ENCODE measurements at regions of chr6 and their contacts with region 1.

Region 1: DNA sequence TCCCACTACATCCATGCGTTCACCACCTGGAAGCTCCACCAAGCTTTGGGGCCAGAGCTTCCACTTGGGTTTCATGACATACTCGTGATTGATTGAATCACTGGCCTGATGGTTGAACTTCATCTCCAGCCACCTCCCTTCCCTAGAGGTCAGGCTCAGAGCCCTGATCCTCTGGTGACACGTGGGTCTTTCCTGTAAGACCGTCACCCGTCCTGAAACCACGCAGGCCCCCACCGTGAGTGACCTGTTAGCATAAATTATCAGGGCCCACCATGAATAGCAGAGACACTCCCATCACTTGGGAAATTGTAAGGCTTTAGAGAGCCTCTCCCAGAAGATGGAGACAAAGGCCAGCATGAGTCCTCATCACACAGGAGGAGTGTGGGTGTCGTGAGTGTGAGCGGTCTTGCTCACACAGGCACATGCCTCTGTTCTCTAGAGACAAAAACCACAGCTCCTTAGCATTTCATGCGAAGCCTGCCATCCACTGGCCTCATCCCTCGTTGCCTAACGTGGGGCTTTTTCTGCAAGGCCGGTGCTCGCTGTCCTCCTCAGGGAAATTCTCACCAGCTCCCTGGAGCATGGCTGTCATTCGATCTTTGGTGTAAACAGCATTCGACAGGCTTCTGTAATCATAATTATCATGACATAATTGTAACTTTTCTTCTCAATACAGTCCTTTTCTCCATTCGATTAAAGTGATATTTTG is 65.1 kb upstream of the DUSP22 start:
- DNase-seq: no peak
- ATAC-seq: no peak
- H3K4me3 Mint-ChIP-seq: no peak overlapping the region
- H3K27ac Mint-ChIP-seq: peak overlapping the region; percentile 95
- H3K4me1 Mint-ChIP-seq: peaks cover 72% of the 10 kb centered on the region
- H3K27me3 Mint-ChIP-seq: no peaks in the 10 kb centered on the region

Region 2: DNA sequence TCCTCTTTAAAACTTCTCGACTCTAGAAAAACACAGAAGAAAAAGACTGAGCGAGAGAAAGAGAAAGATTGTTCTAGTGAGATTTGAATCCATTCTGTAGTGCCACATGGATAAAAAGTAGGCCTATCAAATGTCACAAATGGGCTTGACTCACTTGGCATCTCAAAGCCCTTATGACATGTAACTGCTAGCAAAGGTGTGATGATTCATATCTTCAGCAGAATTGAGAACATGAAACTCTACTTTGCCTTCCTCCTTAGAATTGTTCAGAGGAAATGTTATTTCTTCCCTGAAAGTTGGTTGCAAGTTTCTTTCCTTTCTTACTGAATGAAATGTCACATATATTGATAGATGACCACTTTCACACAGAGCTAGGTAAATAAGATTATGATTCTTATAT is 24.7 kb after region 1 on chr6:
- CTCF ChIA-PET with region 1: no interaction called
- POLR2A ChIA-PET with region 1: no interaction called
- DNase-seq: no peak
- ATAC-seq: peak; percentile 66
- H3K4me3 Mint-ChIP-seq: peak overlapping the region; percentile 14
- H3K27ac Mint-ChIP-seq: peak overlapping the region; percentile 75
- H3K4me1 Mint-ChIP-seq: peaks cover 54% of the 10 kb centered on the region
- H3K27me3 Mint-ChIP-seq: no peaks in the 10 kb centered on the region

Region 3: GRCh38 chr6:291697-292505 is 64.7 kb after region 1 on chr6 and contains the start of gene DUSP22:
- CTCF ChIA-PET with region 1: interaction called, 4 read pairs
- POLR2A ChIA-PET with region 1: interaction called, 20 read pairs
- DNase-seq: peak; percentile 90
- ATAC-seq: peak; percentile 75
- H3K4me3 Mint-ChIP-seq: peak within 1 kb of the TSS; percentile 86
- H3K27ac Mint-ChIP-seq: peak within 1 kb of the TSS; percentile 97
- H3K4me1 Mint-ChIP-seq: peaks cover 67% of the 10 kb centered on the region
- H3K27me3 Mint-ChIP-seq: no peaks in the 10 kb centered on the region
- total RNA-seq, gene DUSP22: 32.6 to 33.2 TPM

Region 4: DNA sequence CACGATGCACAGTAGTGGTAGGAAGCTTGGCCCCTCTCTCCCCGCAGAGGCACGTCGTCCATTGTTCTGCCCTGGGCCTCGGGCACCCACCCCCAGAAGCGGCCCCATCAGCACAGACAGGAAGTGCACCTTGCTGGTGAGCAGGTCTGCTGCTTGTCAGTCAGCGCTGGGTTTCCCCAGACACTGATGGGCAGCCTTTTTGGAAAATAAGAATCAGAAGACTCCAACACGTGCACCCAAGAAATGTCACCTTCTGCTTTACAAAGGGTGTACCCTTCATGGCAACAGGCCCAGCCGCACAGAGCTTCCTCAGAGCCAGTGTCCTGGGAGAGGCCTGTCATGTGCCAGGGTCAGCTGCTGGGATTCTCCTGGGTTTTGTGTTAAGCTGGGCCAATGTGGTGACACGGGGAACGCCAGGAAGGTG is 129.6 kb after region 1 on chr6:
- CTCF ChIA-PET with region 1: no interaction called
- POLR2A ChIA-PET with region 1: no interaction called
- DNase-seq: no peak
- ATAC-seq: no peak
- H3K4me3 Mint-ChIP-seq: no peak overlapping the region
- H3K27ac Mint-ChIP-seq: no peak overlapping the region
- H3K4me1 Mint-ChIP-seq: peaks cover 19% of the 10 kb centered on the region
- H3K27me3 Mint-ChIP-seq: no peaks in the 10 kb centered on the region

Region 5: GRCh38 chr6:422433-423054 is 195.3 kb after region 1 on chr6:
- CTCF ChIA-PET with region 1: no interaction called
- POLR2A ChIA-PET with region 1: no interaction called
- DNase-seq: peak; percentile 79
- ATAC-seq: peak; percentile 89
- H3K4me3 Mint-ChIP-seq: no peak overlapping the region
- H3K27ac Mint-ChIP-seq: no peak overlapping the region
- H3K4me1 Mint-ChIP-seq: peaks cover 22% of the 10 kb centered on the region
- H3K27me3 Mint-ChIP-seq: no peaks in the 10 kb centered on the region